GM12878 (cell line): ENCODE measurements at regions of chr1 and their contacts with region 1.

Region 1: GRCh38 chr1:64809309-64809708 is 64.4 kb downstream of the RAVER2 start:
- DNase-seq: no peak
- ATAC-seq: no peak
- H3K4me3 ChIP-seq: no peak overlapping the region
- H3K27ac ChIP-seq: no peak overlapping the region
- H3K4me1 ChIP-seq: no peaks in the 10 kb centered on the region
- H3K27me3 ChIP-seq: no peaks in the 10 kb centered on the region
- CTCF ChIP-seq: no peak
- EP300 ChIP-seq: no peak
- POLR2A ChIP-seq: no peak
- RAD21 ChIP-seq: no peak

Region 2: DNA sequence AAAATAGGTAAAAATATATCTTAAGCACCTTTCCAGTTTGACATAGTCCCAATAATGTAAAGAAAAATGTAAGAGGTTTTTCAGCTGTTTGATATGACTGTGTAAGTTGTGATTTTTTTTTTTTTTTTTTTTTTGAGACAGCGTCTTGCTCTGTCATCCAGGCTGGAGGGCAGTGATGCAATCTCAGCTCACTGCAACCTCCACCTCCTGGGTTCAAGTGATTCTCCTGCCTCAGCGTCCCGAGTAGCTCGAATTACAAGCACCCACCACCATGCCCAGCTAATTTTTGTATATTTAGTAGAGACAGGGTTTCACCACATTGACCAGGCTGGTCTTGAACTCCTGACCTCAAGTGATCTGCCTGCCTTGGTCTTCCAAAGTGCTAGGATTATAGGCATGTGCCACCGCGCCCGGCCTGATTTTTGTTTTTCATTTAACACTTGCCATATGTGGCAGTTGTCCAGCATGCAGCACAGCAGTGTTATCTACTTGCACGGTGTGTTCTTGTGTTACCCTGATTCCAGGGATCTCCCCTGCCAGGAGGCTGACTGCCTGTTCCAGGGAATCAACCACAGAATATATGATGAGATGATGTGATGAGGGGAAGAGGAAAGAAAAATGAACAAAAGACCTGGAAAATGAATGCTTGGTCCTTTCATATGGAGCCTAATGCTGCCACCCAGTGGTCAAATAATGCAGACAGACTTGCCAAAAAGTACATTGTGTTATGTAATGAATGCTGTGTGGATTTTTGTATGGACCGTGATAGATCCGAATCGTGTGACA is 14.6 kb after region 1 on chr1:
- CTCF ChIA-PET with region 1: interaction called, 20 read pairs
- POLR2A ChIA-PET with region 1: no interaction called
- RAD21 ChIA-PET with region 1: interaction called, 3 read pairs
- SMC1A ChIA-PET with region 1: interaction called, 3 read pairs
- in situ Hi-C with region 1: no loop called
- intact Hi-C with region 1: no loop called
- DNase-seq: peak; percentile 11
- ATAC-seq: peak; percentile 82
- H3K4me3 ChIP-seq: no peak overlapping the region
- H3K27ac ChIP-seq: no peak overlapping the region
- H3K4me1 ChIP-seq: peaks cover under 1% of the 10 kb centered on the region; the same call in 1 of the 2 replicates
- H3K27me3 ChIP-seq: no peaks in the 10 kb centered on the region
- CTCF ChIP-seq: peak; percentile 65 to 84 (median 78)
- EP300 ChIP-seq: no peak
- POLR2A ChIP-seq: no peak
- RAD21 ChIP-seq: peak; percentile 74